Ovary (tissue), 10 donors: ENCODE measurements at regions of chr12 and their contacts with region 1.

Region 1: DNA sequence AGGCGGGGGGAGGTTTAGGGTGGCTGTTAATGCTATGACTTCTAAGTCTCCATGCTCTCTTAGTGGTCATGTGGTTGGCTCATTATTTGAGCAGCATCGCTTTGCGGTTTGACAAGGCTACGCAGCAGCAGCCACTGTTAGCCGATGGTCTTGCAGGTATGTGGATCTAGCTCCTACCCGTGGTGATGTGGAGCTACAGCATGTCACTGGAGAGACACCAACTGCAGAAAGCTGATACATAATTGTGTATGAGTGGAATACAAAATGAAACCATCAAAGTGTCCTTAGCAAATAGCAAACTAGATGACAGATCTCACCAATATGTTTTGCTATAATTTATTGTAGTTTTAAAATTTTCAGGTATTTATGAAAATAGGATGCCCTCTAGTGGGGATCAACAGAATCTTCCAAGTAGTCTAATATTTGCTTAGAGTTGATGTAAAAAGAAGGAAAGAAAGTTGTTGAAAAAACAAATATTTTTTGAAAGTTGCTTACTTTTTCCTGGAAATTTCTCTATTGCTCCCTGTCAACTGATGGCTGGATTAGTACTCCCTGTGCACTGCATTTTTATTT is 94.9 kb downstream of the NAV3 start:
- DNase-seq: peak; percentile 70 to 87 (median 75)
- H3K4me3 ChIP-seq: no peak overlapping the region
- H3K27ac ChIP-seq: no peak overlapping the region
- H3K4me1 ChIP-seq: peaks cover 1% of the 10 kb centered on the region
- H3K27me3 ChIP-seq: no peaks in the 10 kb centered on the region
- CTCF ChIP-seq: peak; percentile 77 to 99 (median 97)
- EP300 ChIP-seq: no peak
- POLR2A ChIP-seq: no peak

Region 2: DNA sequence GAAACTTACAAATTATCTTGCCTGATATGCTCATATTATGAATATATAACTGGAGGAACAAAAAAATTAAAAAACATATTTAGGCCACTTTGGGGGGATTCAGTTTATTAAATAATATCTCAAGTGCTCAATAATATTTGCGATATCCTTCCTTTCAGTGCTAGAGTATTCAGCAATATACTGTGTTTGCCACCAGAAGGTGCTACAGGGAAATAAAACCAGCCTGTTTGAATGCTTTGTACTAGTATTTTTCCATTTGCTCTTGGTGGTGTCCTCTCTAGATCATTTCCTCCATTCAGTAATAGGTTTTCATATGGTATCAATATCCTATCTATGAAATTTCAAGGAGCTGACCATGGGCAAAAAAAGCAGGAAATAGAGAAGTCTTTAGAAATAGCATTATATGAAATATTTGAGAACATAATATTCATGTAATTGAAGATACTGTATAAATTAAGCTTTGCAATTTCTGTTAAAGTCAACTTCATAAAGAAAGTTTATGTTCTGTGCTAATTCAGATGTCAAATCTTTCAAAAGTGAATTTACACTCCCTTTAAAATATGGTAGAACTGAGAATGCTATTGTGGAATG is 201.2 kb before region 1 on chr12:
- intact Hi-C with region 1: loop called (anchors 5 to 10 kb)
- DNase-seq: peak in 1 of 5 donors; percentile 24
- H3K4me3 ChIP-seq: no peak overlapping the region
- H3K27ac ChIP-seq: no peak overlapping the region
- H3K4me1 ChIP-seq: peaks cover 7% of the 10 kb centered on the region
- H3K27me3 ChIP-seq: no peaks in the 10 kb centered on the region
- CTCF ChIP-seq: peak; percentile 21 to 70 (median 61)
- EP300 ChIP-seq: no peak
- POLR2A ChIP-seq: no peak